ENCODE measurements at regions of chr3 and their contacts with region 1.

Region 1: GRCh38 chr3:10224784-10225665 is 23.2 kb upstream of the TATDN2 start:
- DNase-seq: peak; percentile 89
- H3K4me3 Mint-ChIP-seq: peak overlapping the region; percentile 72
- H3K27ac Mint-ChIP-seq: peak overlapping the region; percentile 89
- H3K4me1 Mint-ChIP-seq: peaks cover 69% of the 10 kb centered on the region
- H3K27me3 Mint-ChIP-seq: no peaks in the 10 kb centered on the region

Region 2: DNA sequence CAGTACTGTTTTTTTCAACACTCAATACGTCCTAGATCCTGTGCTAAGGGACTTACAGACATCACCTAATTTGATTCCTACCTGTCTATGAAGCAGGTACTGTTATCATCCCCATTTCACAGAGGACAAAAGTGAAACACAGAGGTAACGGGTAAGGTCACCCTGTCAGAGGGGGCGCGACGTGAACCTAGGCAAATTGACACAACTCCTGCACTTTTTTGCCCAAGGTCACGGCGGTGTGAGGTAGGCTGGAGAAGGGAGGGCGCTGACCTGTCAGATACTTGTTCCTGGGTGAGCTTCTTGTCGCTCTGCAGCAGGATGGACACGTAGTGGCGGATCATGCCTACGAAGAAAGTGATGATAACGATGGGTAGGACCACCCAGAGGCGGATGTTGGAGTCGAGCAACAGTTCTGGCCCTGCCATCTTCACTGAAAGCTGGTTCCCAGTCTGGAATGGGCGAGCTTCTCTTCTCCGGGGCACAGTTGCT is 238.7 kb before region 1 on chr3:
- intact Hi-C with region 1: loop called (anchors 10 kb)
- DNase-seq: no peak
- H3K4me3 Mint-ChIP-seq: peak overlapping the region; percentile 97
- H3K27ac Mint-ChIP-seq: peak overlapping the region; percentile 99
- H3K4me1 Mint-ChIP-seq: peaks cover 31% of the 10 kb centered on the region
- H3K27me3 Mint-ChIP-seq: no peaks in the 10 kb centered on the region

Region 3: GRCh38 chr3:10047876-10048275 is 177.1 kb before region 1 on chr3:
- intact Hi-C with region 1: no loop called
- DNase-seq: no peak
- H3K4me3 Mint-ChIP-seq: no peak overlapping the region
- H3K27ac Mint-ChIP-seq: no peak overlapping the region
- H3K4me1 Mint-ChIP-seq: peaks cover 2% of the 10 kb centered on the region
- H3K27me3 Mint-ChIP-seq: no peaks in the 10 kb centered on the region

Region 4: DNA sequence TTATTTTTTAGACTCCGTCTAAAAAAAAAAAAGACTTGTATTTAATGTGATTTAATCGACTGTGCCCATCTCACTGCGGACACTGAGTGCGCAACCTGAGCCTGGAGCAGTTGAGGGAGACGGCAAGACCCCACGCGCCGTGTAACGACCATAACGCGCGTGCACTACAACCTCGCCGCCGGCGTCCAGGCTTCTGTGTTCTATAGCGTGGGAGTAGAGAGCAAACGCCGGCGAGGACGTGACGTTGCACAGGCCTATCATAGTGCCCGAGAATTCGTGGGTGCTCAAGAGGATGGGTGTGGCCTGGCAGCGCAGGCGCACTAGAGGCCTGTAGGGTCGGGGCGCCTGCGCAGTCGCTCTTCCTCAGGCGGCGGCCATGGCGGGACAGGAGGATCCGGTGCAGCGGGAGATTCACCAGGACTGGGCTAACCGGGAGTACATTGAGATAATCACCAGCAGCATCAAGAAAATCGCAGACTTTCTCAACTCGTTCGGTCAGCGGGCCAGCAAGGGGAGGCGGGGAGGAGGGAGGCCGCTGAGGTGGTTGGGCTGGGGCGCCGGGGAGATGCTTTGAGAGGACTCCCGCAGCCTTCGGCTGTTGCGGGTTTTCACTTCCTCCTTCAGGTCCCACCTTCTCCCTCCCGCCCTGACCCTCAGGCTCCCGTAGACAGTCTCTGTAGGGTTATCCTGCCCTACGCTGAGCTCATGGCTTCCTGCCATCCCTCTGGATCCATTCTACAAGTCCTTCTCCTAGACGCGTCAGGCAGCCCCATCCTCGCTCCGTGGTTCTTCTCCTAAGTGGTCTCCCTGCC is 109.5 kb before region 1 on chr3 and contains the start of gene BRK1:
- intact Hi-C with region 1: loop called (anchors 2 kb)
- DNase-seq: peak; percentile 97
- H3K4me3 Mint-ChIP-seq: peak within 1 kb of the TSS; percentile 98
- H3K27ac Mint-ChIP-seq: peak within 1 kb of the TSS; percentile 93
- H3K4me1 Mint-ChIP-seq: peaks cover 25% of the 10 kb centered on the region
- H3K27me3 Mint-ChIP-seq: peaks cover 2% of the 10 kb centered on the region
- total RNA-seq, gene BRK1: 98.8 and 99.6 TPM in 2 replicates

Region 5: GRCh38 chr3:10142707-10143566 is 82.1 kb before region 1 on chr3:
- intact Hi-C with region 1: loop called (anchors 2 kb)
- DNase-seq: peak; percentile 72
- H3K4me3 Mint-ChIP-seq: peak overlapping the region; percentile 96
- H3K27ac Mint-ChIP-seq: peak overlapping the region; percentile 88
- H3K4me1 Mint-ChIP-seq: peaks cover 26% of the 10 kb centered on the region
- H3K27me3 Mint-ChIP-seq: no peaks in the 10 kb centered on the region

Region 6: DNA sequence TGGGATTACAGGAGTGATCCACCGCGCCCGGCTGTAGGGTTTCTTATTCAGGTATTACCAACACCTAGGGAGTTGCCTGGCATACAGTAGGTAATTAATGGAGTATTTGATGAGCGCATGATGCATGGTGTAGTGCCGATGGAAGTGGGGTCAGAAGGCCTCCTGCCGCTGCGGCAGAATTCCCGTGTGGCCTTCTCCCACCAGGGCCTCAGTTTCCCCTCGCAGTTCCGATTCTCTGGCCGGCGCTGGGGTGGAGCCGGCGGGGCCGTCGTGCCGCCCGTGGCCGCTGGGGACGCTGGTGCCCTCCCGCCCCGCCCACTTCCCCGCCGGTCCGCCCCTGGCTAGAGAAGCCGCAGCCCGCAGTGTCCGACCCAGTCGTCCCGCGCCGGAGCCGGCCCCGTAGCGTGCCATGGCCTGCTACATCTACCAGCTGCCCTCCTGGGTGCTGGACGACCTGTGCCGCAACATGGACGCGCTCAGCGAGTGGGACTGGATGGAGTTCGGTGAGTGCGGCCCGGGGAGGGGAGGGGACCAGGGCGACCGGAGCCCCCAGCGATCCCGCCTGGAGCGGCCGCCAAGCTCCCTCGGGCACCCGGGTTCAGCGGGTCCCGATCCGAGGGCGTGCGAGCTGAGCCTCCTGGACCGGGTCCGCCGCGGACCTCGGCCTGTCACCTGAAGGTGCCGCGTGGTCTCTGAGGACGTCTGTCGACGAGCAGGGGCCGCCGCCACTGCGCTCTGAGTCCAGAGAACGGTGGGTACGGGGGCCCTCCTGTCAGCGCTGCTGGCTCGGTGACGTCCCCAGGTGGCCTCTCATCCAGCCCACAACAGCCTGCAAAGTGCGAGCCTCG is 60.3 kb before region 1 on chr3 and contains the start of gene IRAK2:
- intact Hi-C with region 1: loop called (anchors 1 kb)
- DNase-seq: peak; percentile 88
- H3K4me3 Mint-ChIP-seq: peak within 1 kb of the TSS; percentile 81
- H3K27ac Mint-ChIP-seq: peak within 1 kb of the TSS; percentile 29
- H3K4me1 Mint-ChIP-seq: peaks cover 22% of the 10 kb centered on the region
- H3K27me3 Mint-ChIP-seq: no peaks in the 10 kb centered on the region
- total RNA-seq, gene IRAK2: 4.5 and 5.1 TPM in 2 replicates

Region 7: GRCh38 chr3:10192953-10193691 is 31.9 kb before region 1 on chr3:
- intact Hi-C with region 1: loop called (anchors 1 kb)
- DNase-seq: peak; percentile 86
- H3K4me3 Mint-ChIP-seq: peak overlapping the region; percentile 63
- H3K27ac Mint-ChIP-seq: peak overlapping the region; percentile 92
- H3K4me1 Mint-ChIP-seq: peaks cover 74% of the 10 kb centered on the region
- H3K27me3 Mint-ChIP-seq: no peaks in the 10 kb centered on the region

Region 8: DNA sequence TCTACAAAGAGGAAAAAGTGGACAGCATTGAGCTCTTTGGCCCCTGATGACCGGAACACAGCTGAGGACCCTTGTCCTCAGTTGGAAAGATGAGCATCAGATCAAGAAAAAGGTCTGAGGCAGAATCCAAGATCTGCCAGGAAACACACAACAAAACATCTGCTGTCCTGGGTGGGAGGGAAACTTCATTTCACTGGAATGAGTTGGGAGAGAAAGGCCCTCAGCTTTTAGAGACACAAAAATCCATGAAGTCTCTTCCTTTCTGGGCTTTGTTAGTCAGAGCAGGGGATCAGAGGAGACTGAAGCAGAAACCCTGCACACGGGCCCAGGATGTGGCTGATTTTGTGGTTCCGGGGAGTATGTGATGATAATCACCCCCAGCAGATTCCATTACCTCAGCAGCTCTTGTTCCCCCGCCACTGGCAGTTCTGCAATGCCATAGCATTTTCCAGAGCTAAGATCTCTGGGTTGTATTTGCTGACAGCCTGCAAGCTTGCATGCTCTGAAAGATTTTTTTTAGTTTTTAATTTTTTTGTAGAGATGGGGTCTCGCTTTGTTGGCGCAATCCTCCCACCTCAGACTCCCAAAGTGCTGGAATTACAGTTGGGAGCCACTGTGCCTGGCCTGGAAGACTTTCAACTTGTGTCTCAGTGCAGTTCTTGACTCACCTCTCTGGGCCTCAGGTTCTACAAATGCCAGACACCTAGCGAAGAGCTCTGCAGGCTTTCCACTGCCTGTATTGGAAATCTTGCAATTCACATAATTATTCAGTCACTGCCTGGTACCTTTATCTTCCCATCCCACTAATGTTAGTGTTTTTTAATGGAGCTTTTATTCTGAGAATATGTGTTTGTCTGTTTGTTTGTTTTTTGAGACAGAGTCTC is 17.4 kb after region 1 on chr3:
- intact Hi-C with region 1: loop called (anchors 1 kb)
- DNase-seq: peak; percentile 95
- H3K4me3 Mint-ChIP-seq: peak overlapping the region; percentile 79
- H3K27ac Mint-ChIP-seq: peak overlapping the region; percentile 98
- H3K4me1 Mint-ChIP-seq: peaks cover 50% of the 10 kb centered on the region
- H3K27me3 Mint-ChIP-seq: no peaks in the 10 kb centered on the region